CD4-positive, alpha-beta memory T cell (primary cell): ENCODE measurements at regions of chr20 and their contacts with region 1.

Region 1: GRCh38 chr20:38875175-38875993 is 50.8 kb upstream of the FAM83D start:
- DNase-seq: peak; percentile 78 to 85 (median 79)
- H3K4me3 ChIP-seq: peak overlapping the region; percentile 33 to 48
- H3K4me3 Mint-ChIP-seq: peak overlapping the region; percentile 86 to 95 (median 88)
- H3K27ac ChIP-seq: peak overlapping the region; percentile 75
- H3K27ac Mint-ChIP-seq: peak overlapping the region; percentile 97 to 100 (median 99)
- H3K4me1 ChIP-seq: peaks cover 87% of the 10 kb centered on the region
- H3K4me1 Mint-ChIP-seq: peaks cover 69 to 99% (median 84%) of the 10 kb centered on the region in 4 donors
- H3K27me3 ChIP-seq: no peaks in the 10 kb centered on the region
- H3K27me3 Mint-ChIP-seq: no peaks in the 10 kb centered on the region

Region 2: GRCh38 chr20:38863024-38863851 is 12.1 kb before region 1 on chr20:
- CTCF ChIA-PET with region 1: interaction called, 6 read pairs
- POLR2A ChIA-PET with region 1: interaction called, 66 read pairs
- intact Hi-C with region 1: loop called (anchors 1 kb)
- DNase-seq: peak; percentile 46 to 87 (median 51)
- H3K4me3 ChIP-seq: no peak overlapping the region
- H3K4me3 Mint-ChIP-seq: peak overlapping the region in 7 of 8 donors; percentile 13 to 77 (median 61)
- H3K27ac ChIP-seq: peak overlapping the region; percentile 61
- H3K27ac Mint-ChIP-seq: peak overlapping the region; percentile 92 to 96 (median 95)
- H3K4me1 ChIP-seq: peaks cover 59% of the 10 kb centered on the region
- H3K4me1 Mint-ChIP-seq: peaks cover 51 to 78% (median 62%) of the 10 kb centered on the region in 4 donors
- H3K27me3 ChIP-seq: no peaks in the 10 kb centered on the region
- H3K27me3 Mint-ChIP-seq: no peaks in the 10 kb centered on the region